ENCODE measurements at regions of chr2 and their contacts with region 1.

Region 1: GRCh38 chr2:239326831-239327535 is 73.8 kb downstream of the HDAC4 start:
- DNase-seq: peak; percentile 71
- H3K4me3 Mint-ChIP-seq: peak overlapping the region; percentile 40
- H3K27ac Mint-ChIP-seq: peak overlapping the region; percentile 90
- H3K4me1 Mint-ChIP-seq: peaks cover 73% of the 10 kb centered on the region
- H3K27me3 Mint-ChIP-seq: no peaks in the 10 kb centered on the region

Region 2: DNA sequence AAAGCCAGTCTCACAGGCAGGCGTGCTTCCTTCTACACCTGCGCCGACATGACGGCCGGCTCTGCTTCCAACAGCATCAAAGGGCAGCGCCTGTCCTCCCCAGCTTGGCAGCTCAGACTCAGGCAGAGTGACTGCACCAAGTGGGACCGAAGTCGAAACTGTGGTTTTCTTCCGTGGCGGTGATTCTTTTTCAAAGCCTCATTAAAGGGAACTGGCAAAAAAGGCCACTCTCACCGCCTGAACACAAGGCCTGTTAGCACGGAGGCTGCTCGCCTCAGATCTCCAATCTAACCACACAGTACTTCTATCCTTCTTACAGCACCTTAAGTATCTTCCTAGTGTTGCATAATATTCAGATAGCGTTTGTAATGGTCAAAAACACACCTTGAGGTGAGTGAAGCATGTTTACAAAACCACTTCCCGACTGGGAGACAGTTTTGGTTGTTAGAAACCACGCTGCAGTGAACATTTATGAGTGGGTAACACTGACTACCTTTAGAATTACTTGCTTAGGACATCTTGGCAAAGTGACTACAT is 162.6 kb before region 1 on chr2:
- intact Hi-C with region 1: no loop called
- DNase-seq: peak; percentile 14
- H3K4me3 Mint-ChIP-seq: no peak overlapping the region
- H3K27ac Mint-ChIP-seq: no peak overlapping the region
- H3K4me1 Mint-ChIP-seq: peaks cover 11% of the 10 kb centered on the region
- H3K27me3 Mint-ChIP-seq: no peaks in the 10 kb centered on the region

Region 3: GRCh38 chr2:239339726-239340601 is 13.0 kb after region 1 on chr2:
- intact Hi-C with region 1: loop called (anchors 1 kb)
- DNase-seq: no peak
- H3K4me3 Mint-ChIP-seq: no peak overlapping the region
- H3K27ac Mint-ChIP-seq: peak overlapping the region; percentile 18
- H3K4me1 Mint-ChIP-seq: peaks cover 35% of the 10 kb centered on the region
- H3K27me3 Mint-ChIP-seq: no peaks in the 10 kb centered on the region

Region 4: DNA sequence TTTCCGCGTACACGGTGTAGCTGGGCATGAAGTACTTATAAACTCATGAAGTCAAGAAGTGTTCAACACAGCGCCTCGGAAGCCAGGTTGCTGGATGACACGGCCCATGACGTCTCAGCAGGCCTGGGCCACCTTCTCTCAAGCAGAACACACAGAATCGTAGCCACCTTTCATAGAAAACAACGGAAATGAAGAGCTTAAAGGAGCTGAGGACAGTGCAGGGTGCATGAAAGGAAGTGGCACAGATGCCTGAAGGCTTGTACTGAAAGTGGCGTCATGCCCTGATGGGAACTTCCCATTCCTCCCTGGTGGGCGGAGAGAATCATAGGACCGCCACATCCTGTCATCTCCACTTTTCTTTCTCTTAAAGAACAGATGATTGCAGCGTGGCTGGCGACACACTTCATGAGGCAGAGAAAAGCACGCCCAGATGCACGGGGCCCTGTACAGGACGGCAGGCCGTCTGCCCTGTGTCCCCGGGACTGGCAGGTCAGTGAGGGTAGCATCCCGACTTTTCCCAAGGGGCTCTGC is 42.7 kb after region 1 on chr2:
- intact Hi-C with region 1: loop called (anchors 1 kb)
- DNase-seq: peak; percentile 72
- H3K4me3 Mint-ChIP-seq: peak overlapping the region; percentile 78
- H3K27ac Mint-ChIP-seq: peak overlapping the region; percentile 95
- H3K4me1 Mint-ChIP-seq: peaks cover 11% of the 10 kb centered on the region
- H3K27me3 Mint-ChIP-seq: no peaks in the 10 kb centered on the region